Activated CD4-positive, alpha-beta T cell treated with anti-CD3 and anti-CD28 coated beads for 36 hours (primary cell): ENCODE measurements at regions of chr1 and their contacts with region 1.

Region 1: GRCh38 chr1:175154629-175155472 is 37.7 kb downstream of the KIAA0040 start:
- DNase-seq: peak; percentile 87
- ATAC-seq: peak; percentile 43
- H3K4me3 Mint-ChIP-seq: no peak overlapping the region
- H3K27ac Mint-ChIP-seq: no peak overlapping the region
- H3K4me1 Mint-ChIP-seq: peaks cover 23% of the 10 kb centered on the region
- H3K27me3 Mint-ChIP-seq: peaks cover 28% of the 10 kb centered on the region

Region 2: DNA sequence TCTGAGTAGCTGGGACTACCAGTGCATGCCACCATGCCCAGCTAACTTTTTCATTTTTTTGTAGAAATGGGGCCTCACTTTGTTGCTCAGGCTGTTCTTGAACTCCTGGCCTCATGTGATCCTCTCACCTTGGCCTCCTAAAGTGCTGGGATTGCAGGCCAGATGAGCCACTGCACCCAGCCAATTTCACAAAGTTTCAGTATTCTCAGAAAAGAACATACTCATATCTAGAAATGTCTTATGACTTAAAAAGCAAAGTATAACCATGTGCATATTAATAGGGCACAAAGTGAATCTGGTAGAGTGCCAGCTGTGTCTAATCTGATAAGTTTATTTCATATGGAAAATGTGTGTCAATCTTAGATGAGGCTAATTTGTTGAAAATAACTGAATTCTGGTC is 242.6 kb before region 1 on chr1:
- CTCF ChIA-PET with region 1: no interaction called
- POLR2A ChIA-PET with region 1: no interaction called
- intact Hi-C with region 1: no loop called
- DNase-seq: peak; percentile 65
- ATAC-seq: peak; percentile 85
- H3K4me3 Mint-ChIP-seq: no peak overlapping the region
- H3K27ac Mint-ChIP-seq: peak overlapping the region; percentile 63
- H3K4me1 Mint-ChIP-seq: peaks cover 57% of the 10 kb centered on the region
- H3K27me3 Mint-ChIP-seq: no peaks in the 10 kb centered on the region

Region 3: GRCh38 chr1:175072099-175072951 is 82.5 kb before region 1 on chr1:
- CTCF ChIA-PET with region 1: no interaction called
- POLR2A ChIA-PET with region 1: no interaction called
- intact Hi-C with region 1: no loop called
- DNase-seq: peak; percentile 73
- ATAC-seq: peak; percentile 99
- H3K4me3 Mint-ChIP-seq: no peak overlapping the region
- H3K27ac Mint-ChIP-seq: no peak overlapping the region
- H3K4me1 Mint-ChIP-seq: peaks cover 15% of the 10 kb centered on the region
- H3K27me3 Mint-ChIP-seq: peaks cover 10% of the 10 kb centered on the region

Region 4: GRCh38 chr1:175186433-175187142 is 31.7 kb after region 1 on chr1:
- CTCF ChIA-PET with region 1: interaction called, 29 read pairs
- POLR2A ChIA-PET with region 1: interaction called, 3 read pairs
- intact Hi-C with region 1: loop called in 1 of 2 experiments (anchors 2 kb)
- DNase-seq: no peak
- ATAC-seq: no peak
- H3K4me3 Mint-ChIP-seq: no peak overlapping the region
- H3K27ac Mint-ChIP-seq: peak overlapping the region; percentile 68
- H3K4me1 Mint-ChIP-seq: peaks cover 98% of the 10 kb centered on the region
- H3K27me3 Mint-ChIP-seq: no peaks in the 10 kb centered on the region

Region 5: GRCh38 chr1:175297291-175297690 is 142.4 kb after region 1 on chr1:
- CTCF ChIA-PET with region 1: interaction called, 17 read pairs
- POLR2A ChIA-PET with region 1: no interaction called
- intact Hi-C with region 1: no loop called
- DNase-seq: no peak
- ATAC-seq: peak; percentile 42
- H3K4me3 Mint-ChIP-seq: no peak overlapping the region
- H3K27ac Mint-ChIP-seq: no peak overlapping the region
- H3K4me1 Mint-ChIP-seq: peaks cover 28% of the 10 kb centered on the region
- H3K27me3 Mint-ChIP-seq: peaks cover 4% of the 10 kb centered on the region

Region 6: GRCh38 chr1:175338387-175339135 is 183.7 kb after region 1 on chr1:
- CTCF ChIA-PET with region 1: interaction called, 51 read pairs
- POLR2A ChIA-PET with region 1: no interaction called
- intact Hi-C with region 1: loop called in 1 of 2 experiments (anchors 5 kb)
- DNase-seq: peak; percentile 82
- ATAC-seq: peak; percentile 97
- H3K4me3 Mint-ChIP-seq: no peak overlapping the region
- H3K27ac Mint-ChIP-seq: no peak overlapping the region
- H3K4me1 Mint-ChIP-seq: peaks cover 3% of the 10 kb centered on the region
- H3K27me3 Mint-ChIP-seq: peaks cover 15% of the 10 kb centered on the region

Region 7: DNA sequence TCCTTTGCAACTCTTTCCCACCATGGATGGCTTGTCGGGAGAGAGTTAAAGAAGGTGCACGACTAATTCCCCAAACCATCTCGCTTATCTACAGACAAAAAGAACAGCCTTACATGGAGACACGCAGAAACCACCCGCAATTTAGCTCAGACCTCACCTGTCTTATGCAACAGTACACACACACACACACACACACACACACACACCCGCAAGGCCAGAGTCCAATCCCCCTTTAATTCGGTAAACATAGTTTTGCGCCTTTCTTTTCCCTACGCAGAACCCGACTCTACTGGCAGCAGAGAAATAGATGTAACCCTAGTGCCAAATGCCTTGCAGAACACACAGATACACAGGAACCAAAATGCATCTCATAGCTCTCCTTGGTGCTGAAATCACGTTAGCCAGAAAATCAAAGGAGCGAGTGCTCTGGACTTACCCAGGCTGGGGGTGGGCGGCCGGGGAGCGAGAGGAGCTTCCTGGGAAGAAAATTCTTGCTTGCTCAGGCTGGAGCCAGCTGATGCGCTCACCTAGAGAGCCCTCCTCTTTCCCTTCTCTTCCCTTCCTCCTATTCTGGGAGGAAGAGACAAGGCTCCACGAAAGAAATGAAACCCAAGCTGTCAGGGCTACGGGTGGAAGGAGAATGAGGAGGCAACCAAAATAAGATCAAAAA is 588.1 kb after region 1 on chr1:
- CTCF ChIA-PET with region 1: interaction called, 4 read pairs
- POLR2A ChIA-PET with region 1: no interaction called
- intact Hi-C with region 1: loop called in 1 of 2 experiments (anchors 2 kb)
- DNase-seq: no peak
- ATAC-seq: no peak
- H3K4me3 Mint-ChIP-seq: no peak overlapping the region
- H3K27ac Mint-ChIP-seq: no peak overlapping the region
- H3K4me1 Mint-ChIP-seq: no peaks in the 10 kb centered on the region
- H3K27me3 Mint-ChIP-seq: peaks cover 29% of the 10 kb centered on the region